AG04450 (cell line): ENCODE measurements at regions of chr3 and their contacts with region 1.

Region 1: DNA sequence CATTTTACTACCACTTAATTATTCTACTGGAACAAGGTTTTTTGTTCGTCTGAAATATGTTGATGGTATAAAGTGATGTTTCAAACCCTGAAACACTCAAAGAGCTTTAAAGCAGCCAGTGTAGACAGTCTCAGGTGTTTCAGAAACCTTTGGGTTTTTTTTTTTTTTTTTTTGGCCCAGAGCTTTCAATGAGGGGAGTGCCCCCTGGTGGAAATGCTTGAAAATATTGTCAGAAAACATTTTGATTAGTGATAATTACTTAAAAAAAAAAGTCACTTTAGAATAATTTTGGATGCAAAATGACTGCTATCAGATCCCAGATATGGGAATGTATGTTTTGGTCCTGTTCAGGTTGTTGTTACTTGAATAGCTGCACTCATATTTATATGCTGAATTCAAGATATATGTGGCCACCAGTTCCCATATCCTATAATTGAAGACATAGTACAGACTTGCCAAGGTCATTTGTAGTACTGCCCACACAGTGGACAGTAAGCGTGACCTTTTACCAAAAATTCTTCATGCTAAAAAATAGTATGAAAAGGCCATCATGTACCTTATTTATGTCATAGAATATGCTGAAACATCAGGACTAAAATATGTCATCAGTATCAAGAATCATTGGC is 35.9 kb downstream of the SATB1 start:
- DNase-seq: no peak
- H3K4me3 ChIP-seq: no peak overlapping the region
- H3K27ac ChIP-seq: no peak overlapping the region
- H3K27me3 ChIP-seq: no peaks in the 10 kb centered on the region
- CTCF ChIP-seq: peak; percentile 61

Region 2: DNA sequence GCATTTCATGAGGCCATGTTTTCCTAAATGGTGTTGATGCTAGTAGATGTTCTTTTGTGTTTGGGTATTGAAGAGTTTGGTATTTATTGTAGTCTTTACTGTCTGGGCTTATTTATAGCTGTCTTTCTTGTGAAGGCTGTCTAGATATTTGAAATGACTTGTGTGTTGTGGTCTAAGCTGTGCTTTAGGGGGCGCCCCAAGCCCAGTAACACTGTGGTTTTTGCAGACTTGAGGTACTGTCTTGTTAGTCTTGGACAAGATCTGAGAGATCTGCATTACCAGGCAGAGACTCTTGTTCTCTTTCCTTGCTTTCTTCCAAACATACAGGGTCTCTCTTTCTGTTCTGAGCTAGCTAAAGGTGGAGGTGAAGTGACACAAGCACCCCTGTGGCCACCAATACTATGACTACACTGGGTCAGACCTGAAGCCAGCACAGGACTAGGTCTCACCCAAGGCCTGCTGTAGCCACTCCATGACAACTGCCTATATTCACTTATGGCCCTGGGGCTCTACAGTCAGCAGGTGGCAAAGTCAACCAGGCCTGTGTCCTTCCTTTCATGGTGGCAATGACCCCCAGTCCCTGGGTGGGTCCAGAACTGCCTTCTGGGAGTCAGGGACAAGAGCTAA is 494.7 kb before region 1 on chr3:
- CTCF ChIA-PET with region 1: interaction called, 21 read pairs
- POLR2A ChIA-PET with region 1: no interaction called
- DNase-seq: peak; percentile 4
- H3K4me3 ChIP-seq: no peak overlapping the region
- H3K27ac ChIP-seq: no peak overlapping the region
- H3K27me3 ChIP-seq: no peaks in the 10 kb centered on the region
- CTCF ChIP-seq: peak; percentile 50

Region 3: GRCh38 chr3:18363338-18363737 is 25.9 kb before region 1 on chr3:
- CTCF ChIA-PET with region 1: interaction called, 10 read pairs
- POLR2A ChIA-PET with region 1: no interaction called
- DNase-seq: no peak
- H3K4me3 ChIP-seq: no peak overlapping the region
- H3K27ac ChIP-seq: no peak overlapping the region
- H3K27me3 ChIP-seq: no peaks in the 10 kb centered on the region
- CTCF ChIP-seq: no peak

Region 4: GRCh38 chr3:18378218-18378617 is 11.0 kb before region 1 on chr3:
- CTCF ChIA-PET with region 1: interaction called, 27 read pairs
- POLR2A ChIA-PET with region 1: no interaction called
- DNase-seq: no peak
- H3K4me3 ChIP-seq: no peak overlapping the region
- H3K27ac ChIP-seq: no peak overlapping the region
- H3K27me3 ChIP-seq: no peaks in the 10 kb centered on the region
- CTCF ChIP-seq: no peak

Region 5: GRCh38 chr3:18401300-18401961 is 12.2 kb after region 1 on chr3:
- CTCF ChIA-PET with region 1: interaction called, 25 read pairs
- POLR2A ChIA-PET with region 1: no interaction called
- DNase-seq: no peak
- H3K4me3 ChIP-seq: no peak overlapping the region
- H3K27ac ChIP-seq: no peak overlapping the region
- H3K27me3 ChIP-seq: no peaks in the 10 kb centered on the region
- CTCF ChIP-seq: no peak

Region 6: GRCh38 chr3:18499301-18499700 is 110.1 kb after region 1 on chr3:
- CTCF ChIA-PET with region 1: no interaction called
- POLR2A ChIA-PET with region 1: no interaction called
- DNase-seq: no peak
- H3K4me3 ChIP-seq: no peak overlapping the region
- H3K27ac ChIP-seq: no peak overlapping the region
- H3K27me3 ChIP-seq: no peaks in the 10 kb centered on the region
- CTCF ChIP-seq: no peak

Region 7: GRCh38 chr3:20079621-20080020 is 1690.4 kb after region 1 on chr3:
- CTCF ChIA-PET with region 1: interaction called, 10 read pairs
- POLR2A ChIA-PET with region 1: no interaction called
- DNase-seq: no peak
- H3K4me3 ChIP-seq: no peak overlapping the region
- H3K27ac ChIP-seq: no peak overlapping the region
- H3K27me3 ChIP-seq: no peaks in the 10 kb centered on the region
- CTCF ChIP-seq: no peak